MCF 10A (cell line): ENCODE measurements at regions of chr9 and their contacts with region 1.

Region 1: DNA sequence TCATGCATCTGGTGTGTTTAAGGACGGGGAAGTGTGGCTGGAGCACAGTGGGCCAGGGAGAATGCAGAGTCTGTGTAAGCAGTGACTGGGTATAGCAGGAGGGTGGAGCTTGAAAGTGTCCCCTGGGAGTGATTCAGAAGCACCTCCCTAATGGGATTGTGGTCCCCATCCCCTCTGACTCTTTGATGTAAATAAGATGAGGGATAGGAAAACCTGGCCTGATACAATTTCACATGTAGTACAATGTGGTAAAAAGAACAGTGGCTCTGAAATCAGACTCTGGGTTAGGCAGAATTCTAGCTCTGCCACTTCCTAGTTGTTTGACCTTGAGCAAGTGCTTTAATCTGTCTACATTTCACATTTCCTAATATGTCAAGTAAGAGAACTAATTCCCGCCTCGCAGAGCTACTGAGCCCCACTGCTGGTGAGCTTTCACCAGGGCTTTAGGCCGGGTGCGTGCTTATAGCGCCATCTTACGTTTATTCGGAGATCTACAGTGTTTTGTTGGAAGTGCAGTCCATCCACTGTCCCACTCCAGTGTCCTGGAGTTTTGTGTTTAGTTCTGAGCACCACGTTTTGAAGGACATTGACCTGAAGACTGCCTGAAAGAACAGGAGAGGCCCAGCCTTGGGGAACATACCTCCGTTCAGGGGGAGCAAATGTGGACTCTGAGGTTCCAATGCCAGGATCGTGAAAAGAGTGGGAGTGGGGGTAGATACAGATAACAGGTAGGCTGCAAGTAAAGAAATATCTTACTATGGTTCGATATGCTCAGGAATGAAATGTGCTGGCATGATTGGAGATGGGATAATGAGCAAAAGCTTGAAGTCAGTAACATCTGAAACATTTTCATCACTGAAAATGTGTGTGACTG is 51.2 kb upstream of the TESK1 start:
- DNase-seq: peak; percentile 78
- H3K4me3 Mint-ChIP-seq: no peak overlapping the region
- H3K27ac Mint-ChIP-seq: no peak overlapping the region
- H3K4me1 Mint-ChIP-seq: peaks cover 12% of the 10 kb centered on the region
- H3K27me3 Mint-ChIP-seq: no peaks in the 10 kb centered on the region
- CTCF ChIP-seq: peak; percentile 90

Region 2: GRCh38 chr9:35287986-35288632 is 265.8 kb before region 1 on chr9:
- CTCF ChIA-PET with region 1: no interaction called
- POLR2A ChIA-PET with region 1: no interaction called
- intact Hi-C with region 1: no loop called
- DNase-seq: peak; percentile 54
- H3K4me3 Mint-ChIP-seq: peak overlapping the region; percentile 0
- H3K27ac Mint-ChIP-seq: peak overlapping the region; percentile 39
- H3K4me1 Mint-ChIP-seq: peaks cover 16% of the 10 kb centered on the region
- H3K27me3 Mint-ChIP-seq: no peaks in the 10 kb centered on the region
- CTCF ChIP-seq: no peak

Region 3: GRCh38 chr9:35470894-35471293 is 83.0 kb before region 1 on chr9:
- CTCF ChIA-PET with region 1: interaction called, 24 read pairs
- POLR2A ChIA-PET with region 1: no interaction called
- intact Hi-C with region 1: no loop called
- DNase-seq: peak; percentile 91
- H3K4me3 Mint-ChIP-seq: peak overlapping the region; percentile 47
- H3K27ac Mint-ChIP-seq: peak overlapping the region; percentile 59
- H3K4me1 Mint-ChIP-seq: peaks cover 25% of the 10 kb centered on the region
- H3K27me3 Mint-ChIP-seq: no peaks in the 10 kb centered on the region
- CTCF ChIP-seq: no peak

Region 4: GRCh38 chr9:35481347-35481975 is 72.4 kb before region 1 on chr9:
- CTCF ChIA-PET with region 1: interaction called, 55 read pairs
- POLR2A ChIA-PET with region 1: interaction called, 3 read pairs
- intact Hi-C with region 1: loop called (anchors 1 kb)
- DNase-seq: peak; percentile 85
- H3K4me3 Mint-ChIP-seq: no peak overlapping the region
- H3K27ac Mint-ChIP-seq: no peak overlapping the region
- H3K4me1 Mint-ChIP-seq: peaks cover 10% of the 10 kb centered on the region
- H3K27me3 Mint-ChIP-seq: no peaks in the 10 kb centered on the region
- CTCF ChIP-seq: peak; percentile 84

Region 5: DNA sequence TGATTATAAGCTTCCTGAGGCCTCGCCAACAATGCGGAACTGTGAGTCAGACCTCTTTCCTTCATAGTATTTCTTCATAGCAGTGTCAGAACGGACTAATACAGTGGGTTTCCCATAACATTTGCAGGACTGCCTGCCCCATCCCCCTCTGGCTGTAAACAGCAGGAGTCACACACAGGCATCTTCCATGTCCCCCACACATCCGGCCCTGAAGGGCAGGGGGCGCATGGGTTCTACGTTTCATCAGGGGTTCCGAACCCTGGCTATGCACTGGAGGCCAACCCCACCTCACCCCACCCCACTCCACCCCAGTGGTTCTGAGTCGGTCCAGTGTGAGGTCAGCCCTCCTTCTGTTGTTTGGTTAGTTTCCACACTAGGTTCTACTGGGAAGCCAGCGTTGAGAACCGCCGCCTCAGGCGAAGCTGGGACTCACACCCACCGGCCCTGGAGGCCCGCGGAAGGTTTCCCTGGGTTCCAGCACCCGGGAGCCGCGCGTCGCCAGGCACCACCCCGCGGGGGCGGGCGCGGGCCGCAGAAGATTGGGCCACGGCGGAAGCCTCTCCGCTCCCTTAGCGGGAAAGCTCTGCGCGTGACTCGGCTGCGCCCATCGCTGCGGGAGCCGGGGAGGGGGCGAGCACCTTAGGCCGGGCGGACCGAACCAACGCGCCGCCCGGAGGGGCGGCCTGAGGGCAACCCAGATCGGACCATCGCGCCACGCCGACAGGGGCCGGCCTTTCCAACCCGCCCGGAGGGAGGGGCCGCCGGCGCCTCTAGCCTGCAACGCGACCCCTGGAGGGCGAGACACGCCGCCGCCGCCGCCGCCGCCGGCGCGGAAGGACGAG is 64.4 kb before region 1 on chr9 and contains the start of gene RUSC2:
- CTCF ChIA-PET with region 1: interaction called, 20 read pairs
- POLR2A ChIA-PET with region 1: interaction called, 13 read pairs
- intact Hi-C with region 1: loop called (anchors 1 kb)
- DNase-seq: peak; percentile 85
- H3K4me3 Mint-ChIP-seq: peak within 1 kb of the TSS; percentile 93
- H3K27ac Mint-ChIP-seq: peak within 1 kb of the TSS; percentile 97
- H3K4me1 Mint-ChIP-seq: peaks cover 23% of the 10 kb centered on the region
- H3K27me3 Mint-ChIP-seq: no peaks in the 10 kb centered on the region
- CTCF ChIP-seq: peak; percentile 20
- total RNA-seq, gene RUSC2: 27.8 and 30.5 TPM in 2 replicates

Region 6: GRCh38 chr9:35510745-35511428 is 43.0 kb before region 1 on chr9:
- CTCF ChIA-PET with region 1: interaction called, 31 read pairs
- POLR2A ChIA-PET with region 1: interaction called, 18 read pairs
- intact Hi-C with region 1: loop called (anchors 2 kb)
- DNase-seq: peak; percentile 91
- H3K4me3 Mint-ChIP-seq: no peak overlapping the region
- H3K27ac Mint-ChIP-seq: peak overlapping the region; percentile 78
- H3K4me1 Mint-ChIP-seq: peaks cover 39% of the 10 kb centered on the region
- H3K27me3 Mint-ChIP-seq: no peaks in the 10 kb centered on the region
- CTCF ChIP-seq: peak; percentile 16

Region 7: GRCh38 chr9:35518226-35518821 is 35.6 kb before region 1 on chr9:
- CTCF ChIA-PET with region 1: interaction called, 19 read pairs
- POLR2A ChIA-PET with region 1: interaction called, 18 read pairs
- intact Hi-C with region 1: no loop called
- DNase-seq: peak; percentile 64
- H3K4me3 Mint-ChIP-seq: peak overlapping the region; percentile 25
- H3K27ac Mint-ChIP-seq: peak overlapping the region; percentile 89
- H3K4me1 Mint-ChIP-seq: peaks cover 48% of the 10 kb centered on the region
- H3K27me3 Mint-ChIP-seq: no peaks in the 10 kb centered on the region
- CTCF ChIP-seq: no peak

Region 8: GRCh38 chr9:35538361-35539234 is 15.3 kb before region 1 on chr9:
- CTCF ChIA-PET with region 1: interaction called, 47 read pairs
- POLR2A ChIA-PET with region 1: interaction called, 3 read pairs
- intact Hi-C with region 1: no loop called
- DNase-seq: no peak
- H3K4me3 Mint-ChIP-seq: peak overlapping the region; percentile 28
- H3K27ac Mint-ChIP-seq: no peak overlapping the region
- H3K4me1 Mint-ChIP-seq: peaks cover 13% of the 10 kb centered on the region
- H3K27me3 Mint-ChIP-seq: no peaks in the 10 kb centered on the region
- CTCF ChIP-seq: no peak